Mammary epithelial cell (primary cell): ENCODE measurements at regions of chr18 and their contacts with region 1.

Region 1: GRCh38 chr18:9905401-9905922 is 8.4 kb upstream of the VAPA start:
- DNase-seq: peak; percentile 84
- H3K4me3 ChIP-seq: no peak overlapping the region
- H3K27ac ChIP-seq: no peak overlapping the region
- H3K4me1 ChIP-seq: peaks cover 15% of the 10 kb centered on the region
- H3K27me3 ChIP-seq: no peaks in the 10 kb centered on the region
- CTCF ChIP-seq: no peak

Region 2: DNA sequence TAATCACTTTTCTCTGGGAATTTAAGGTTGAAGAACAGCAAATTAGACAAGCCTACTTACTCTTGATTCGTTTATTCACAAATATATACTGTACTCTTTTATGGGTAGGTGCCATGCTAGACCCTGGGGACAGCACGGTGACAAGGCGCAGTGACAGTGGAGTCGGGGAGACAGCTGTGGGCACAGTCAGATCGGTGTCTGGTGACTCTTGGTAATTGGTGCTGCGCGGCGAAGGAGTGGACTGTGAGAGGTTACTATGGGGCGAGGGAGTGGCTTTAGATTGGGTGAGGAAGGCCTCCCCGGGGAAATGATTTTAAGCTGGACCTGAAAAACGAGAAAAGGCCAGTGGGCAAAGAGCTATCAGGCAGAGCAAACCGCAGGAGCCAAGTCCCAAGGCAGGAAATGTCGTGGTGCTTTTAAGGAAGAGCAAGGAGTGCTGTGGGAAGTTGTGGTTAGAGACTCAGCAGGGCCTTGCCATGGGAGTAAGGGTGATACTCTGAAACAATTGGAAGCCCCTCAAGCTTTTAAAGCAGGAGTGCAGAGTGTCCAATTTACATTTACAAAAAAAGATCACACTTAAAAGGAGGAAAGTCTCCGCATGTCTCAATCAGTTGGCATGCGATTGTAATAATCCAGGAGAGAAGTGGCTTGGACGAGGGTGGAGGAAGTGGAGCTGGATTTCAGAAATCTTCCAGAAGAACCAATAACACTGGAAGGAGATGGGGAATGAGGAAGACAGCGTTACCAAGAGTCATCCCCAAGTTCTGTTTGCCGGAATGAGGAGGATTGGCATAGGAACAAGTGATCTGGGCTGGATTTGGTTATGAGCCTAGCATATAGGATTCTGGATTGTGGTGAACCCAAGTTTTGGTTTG is 55.8 kb before region 1 on chr18:
- CTCF ChIA-PET with region 1: no interaction called
- dilution Hi-C with region 1: no loop called
- in situ Hi-C with region 1: loop called in 1 of 2 experiments (anchors 10 kb)
- intact Hi-C with region 1: no loop called
- DNase-seq: no peak
- H3K4me3 ChIP-seq: no peak overlapping the region
- H3K27ac ChIP-seq: no peak overlapping the region
- H3K4me1 ChIP-seq: no peaks in the 10 kb centered on the region
- H3K27me3 ChIP-seq: no peaks in the 10 kb centered on the region
- CTCF ChIP-seq: no peak

Region 3: GRCh38 chr18:9869715-9870430 is 35.6 kb before region 1 on chr18:
- CTCF ChIA-PET with region 1: no interaction called
- dilution Hi-C with region 1: loop called (anchors 5 kb)
- in situ Hi-C with region 1: no loop called
- intact Hi-C with region 1: no loop called
- DNase-seq: peak; percentile 63
- H3K4me3 ChIP-seq: no peak overlapping the region
- H3K27ac ChIP-seq: no peak overlapping the region
- H3K4me1 ChIP-seq: peaks cover 26% of the 10 kb centered on the region
- H3K27me3 ChIP-seq: no peaks in the 10 kb centered on the region
- CTCF ChIP-seq: no peak

Region 4: DNA sequence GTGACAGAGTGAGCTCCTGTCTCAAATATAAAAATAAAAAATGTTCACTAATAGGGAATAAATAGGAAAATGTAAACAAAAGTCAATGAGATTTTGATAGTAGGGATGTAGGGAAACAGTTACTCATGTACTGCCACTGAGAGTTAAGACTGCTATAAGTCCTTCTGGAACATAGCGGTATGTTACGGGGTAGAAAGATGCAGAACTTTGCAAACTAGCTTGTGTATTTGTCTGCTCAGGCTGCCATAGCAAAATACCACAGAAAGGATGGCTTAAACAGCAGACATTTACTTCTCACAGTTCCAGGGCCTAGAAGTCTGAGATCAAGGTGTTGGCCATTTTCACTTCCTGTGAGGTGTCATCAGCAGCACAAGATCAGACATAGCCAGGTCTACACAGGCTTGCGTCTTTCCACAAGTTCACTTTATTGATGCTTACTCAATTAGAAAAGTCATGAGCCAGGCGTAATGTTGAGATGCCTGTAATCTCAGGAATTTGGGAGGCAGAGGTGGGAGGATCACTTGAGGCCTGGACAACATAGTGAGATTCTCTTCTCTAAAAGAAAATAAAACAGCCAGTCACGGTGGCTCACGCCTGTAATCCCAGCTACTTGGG is 10.9 kb before region 1 on chr18:
- CTCF ChIA-PET with region 1: no interaction called
- dilution Hi-C with region 1: no loop called
- in situ Hi-C with region 1: no loop called
- intact Hi-C with region 1: loop called (anchors 1 kb)
- DNase-seq: no peak
- H3K4me3 ChIP-seq: no peak overlapping the region
- H3K27ac ChIP-seq: no peak overlapping the region
- H3K4me1 ChIP-seq: peaks cover 19% of the 10 kb centered on the region
- H3K27me3 ChIP-seq: no peaks in the 10 kb centered on the region
- CTCF ChIP-seq: no peak

Region 5: GRCh38 chr18:10860928-10861327 is 955.5 kb after region 1 on chr18:
- CTCF ChIA-PET with region 1: no interaction called
- dilution Hi-C with region 1: no loop called
- in situ Hi-C with region 1: no loop called
- intact Hi-C with region 1: no loop called
- DNase-seq: no peak
- H3K4me3 ChIP-seq: no peak overlapping the region
- H3K27ac ChIP-seq: no peak overlapping the region
- H3K4me1 ChIP-seq: no peaks in the 10 kb centered on the region
- H3K27me3 ChIP-seq: no peaks in the 10 kb centered on the region
- CTCF ChIP-seq: no peak